Left ventricle myocardium inferior (tissue), 1 donor: ENCODE measurements at regions of chr11 and their contacts with region 1.

Region 1: GRCh38 chr11:61947486-61948210 is 2.5 kb upstream of the BEST1 start:
- DNase-seq: peak; percentile 85
- H3K4me3 ChIP-seq: no peak overlapping the region
- H3K27ac ChIP-seq: peak overlapping the region; percentile 46
- H3K4me1 ChIP-seq: peaks cover 32% of the 10 kb centered on the region
- H3K27me3 ChIP-seq: no peaks in the 10 kb centered on the region
- CTCF ChIP-seq: peak; percentile 94

Region 2: GRCh38 chr11:61701242-61701886 is 246.3 kb before region 1 on chr11:
- intact Hi-C with region 1: no loop called
- DNase-seq: no peak
- H3K4me3 ChIP-seq: no peak overlapping the region
- H3K27ac ChIP-seq: peak overlapping the region; percentile 92
- H3K4me1 ChIP-seq: peaks cover 57% of the 10 kb centered on the region
- H3K27me3 ChIP-seq: no peaks in the 10 kb centered on the region
- CTCF ChIP-seq: peak; percentile 37

Region 3: DNA sequence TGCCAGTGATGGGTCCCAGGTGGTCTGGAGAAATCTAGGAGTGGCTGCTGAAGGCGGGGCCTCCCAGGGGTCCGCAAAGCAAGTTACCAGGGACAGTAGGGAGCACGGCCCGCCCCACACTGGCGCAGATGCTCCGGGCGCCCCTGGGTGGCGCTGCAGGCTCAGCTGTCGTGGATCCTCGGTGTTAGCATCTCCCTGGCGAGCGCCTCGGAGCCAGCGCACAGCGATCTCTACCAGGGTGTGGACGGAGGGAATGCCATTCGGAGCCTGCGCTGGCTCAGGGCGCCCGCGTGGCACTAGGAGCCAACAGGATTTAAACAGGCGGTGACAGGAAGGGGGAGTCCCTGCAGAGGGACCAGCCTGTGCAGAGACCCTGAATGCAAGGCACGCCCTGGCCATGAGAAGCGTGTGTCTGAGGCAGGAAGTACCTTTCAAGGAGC is 76.5 kb before region 1 on chr11:
- intact Hi-C with region 1: loop called (anchors 2 kb)
- DNase-seq: peak; percentile 81
- H3K4me3 ChIP-seq: peak overlapping the region; percentile 44
- H3K27ac ChIP-seq: peak overlapping the region; percentile 65
- H3K4me1 ChIP-seq: peaks cover 56% of the 10 kb centered on the region
- H3K27me3 ChIP-seq: no peaks in the 10 kb centered on the region
- CTCF ChIP-seq: peak; percentile 97

Region 4: DNA sequence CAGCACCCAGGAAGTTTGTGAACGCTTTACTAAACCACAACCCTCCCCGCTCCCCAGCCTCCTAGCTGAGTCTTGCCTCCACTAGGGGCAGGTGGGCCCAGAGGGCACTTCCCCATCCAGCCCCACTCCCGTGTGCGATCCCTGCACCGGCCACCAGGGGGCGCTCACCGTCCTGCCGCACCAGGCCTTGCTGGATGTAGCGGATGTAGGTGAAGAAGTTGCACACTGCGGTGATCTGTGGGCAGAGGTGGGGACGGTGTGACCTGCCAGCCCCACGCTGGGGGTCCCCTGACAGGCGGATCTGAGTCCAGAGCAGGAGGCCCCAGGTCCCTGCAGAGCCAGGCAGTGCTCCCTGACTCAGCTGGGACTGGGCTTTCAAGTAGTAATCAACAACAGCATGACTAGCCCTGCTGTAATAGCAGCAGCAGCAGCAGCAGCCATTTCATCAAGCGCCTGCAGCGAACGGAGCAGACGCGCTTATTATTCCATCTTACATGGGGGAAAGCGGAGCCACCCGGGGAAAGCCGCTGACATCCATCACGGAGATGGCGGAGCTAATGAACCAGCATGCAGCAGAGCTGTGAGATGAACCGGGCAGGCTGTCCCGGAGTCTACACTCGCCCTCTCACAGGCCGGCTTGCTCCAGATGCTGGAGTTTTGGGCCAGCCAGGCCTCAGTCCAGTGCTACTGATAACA is 48.4 kb before region 1 on chr11:
- intact Hi-C with region 1: loop called (anchors 5 kb)
- DNase-seq: peak; percentile 83
- H3K4me3 ChIP-seq: no peak overlapping the region
- H3K27ac ChIP-seq: peak overlapping the region; percentile 61
- H3K4me1 ChIP-seq: peaks cover 22% of the 10 kb centered on the region
- H3K27me3 ChIP-seq: no peaks in the 10 kb centered on the region
- CTCF ChIP-seq: peak; percentile 100

Region 5: GRCh38 chr11:62108017-62108750 is 160.5 kb after region 1 on chr11:
- intact Hi-C with region 1: no loop called
- DNase-seq: no peak
- H3K4me3 ChIP-seq: no peak overlapping the region
- H3K27ac ChIP-seq: no peak overlapping the region
- H3K4me1 ChIP-seq: peaks cover 45% of the 10 kb centered on the region
- H3K27me3 ChIP-seq: no peaks in the 10 kb centered on the region
- CTCF ChIP-seq: peak; percentile 87